ENCODE measurements at regions of chr6 and their contacts with region 1.

Region 1: GRCh38 chr6:116847227-116847626 is 18.3 kb upstream of the GPRC6A start:
- DNase-seq: no peak
- H3K4me3 Mint-ChIP-seq: no peak overlapping the region
- H3K27ac Mint-ChIP-seq: no peak overlapping the region
- H3K4me1 Mint-ChIP-seq: no peaks in the 10 kb centered on the region
- H3K27me3 Mint-ChIP-seq: peaks cover 2% of the 10 kb centered on the region

Region 2: DNA sequence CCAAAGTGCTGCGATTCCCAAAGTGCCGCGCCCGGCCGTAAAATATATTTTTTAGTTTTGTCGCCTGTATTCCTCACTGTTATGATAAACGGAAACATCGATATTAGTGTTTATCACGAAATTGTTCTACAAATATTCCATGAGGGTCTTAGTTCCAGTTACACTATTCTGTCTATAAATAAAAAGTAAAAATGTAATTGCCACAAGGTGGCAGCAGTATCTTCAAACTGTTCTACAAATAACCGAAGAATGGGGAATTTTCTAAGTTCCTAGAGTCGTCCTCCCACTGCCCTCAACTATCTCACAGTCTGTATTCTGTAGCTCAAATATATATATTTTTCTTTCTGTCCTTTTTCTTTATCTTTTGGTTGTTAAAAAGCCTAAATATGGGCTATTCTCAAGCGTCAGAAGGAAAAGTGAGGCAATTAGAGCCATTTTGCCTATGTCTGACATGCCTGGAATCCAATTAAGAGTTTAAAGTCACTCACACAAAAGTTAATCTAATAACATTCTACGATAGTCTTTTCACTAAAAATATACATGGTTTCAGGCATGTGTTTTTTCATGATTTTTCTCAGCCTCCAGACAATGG is 67.6 kb before region 1 on chr6:
- intact Hi-C with region 1: loop called (anchors 5 kb)
- DNase-seq: no peak
- H3K4me3 Mint-ChIP-seq: no peak overlapping the region
- H3K27ac Mint-ChIP-seq: no peak overlapping the region
- H3K4me1 Mint-ChIP-seq: no peaks in the 10 kb centered on the region
- H3K27me3 Mint-ChIP-seq: peaks cover 5% of the 10 kb centered on the region

Region 3: GRCh38 chr6:116836606-116837342 is 10.5 kb before region 1 on chr6:
- intact Hi-C with region 1: no loop called
- DNase-seq: no peak
- H3K4me3 Mint-ChIP-seq: no peak overlapping the region
- H3K27ac Mint-ChIP-seq: no peak overlapping the region
- H3K4me1 Mint-ChIP-seq: no peaks in the 10 kb centered on the region
- H3K27me3 Mint-ChIP-seq: no peaks in the 10 kb centered on the region

Measured in activated T-helper 1 cell treated with anti-CD3 and anti-CD28 coated beads, Interleukin-12 subunit alpha, Interleukin-12 subunit beta, Interleukin-2, Interleukin-4 antibody, amounts not matched to agents 30 ng/mL and 10 ng/mL and 1 ng/mL, durations not matched to agents 14 hours and 24 hours and 36 hours (primary cell).